Natural killer cell (primary cell): ENCODE measurements at regions of chr5 and their contacts with region 1.

Region 1: DNA sequence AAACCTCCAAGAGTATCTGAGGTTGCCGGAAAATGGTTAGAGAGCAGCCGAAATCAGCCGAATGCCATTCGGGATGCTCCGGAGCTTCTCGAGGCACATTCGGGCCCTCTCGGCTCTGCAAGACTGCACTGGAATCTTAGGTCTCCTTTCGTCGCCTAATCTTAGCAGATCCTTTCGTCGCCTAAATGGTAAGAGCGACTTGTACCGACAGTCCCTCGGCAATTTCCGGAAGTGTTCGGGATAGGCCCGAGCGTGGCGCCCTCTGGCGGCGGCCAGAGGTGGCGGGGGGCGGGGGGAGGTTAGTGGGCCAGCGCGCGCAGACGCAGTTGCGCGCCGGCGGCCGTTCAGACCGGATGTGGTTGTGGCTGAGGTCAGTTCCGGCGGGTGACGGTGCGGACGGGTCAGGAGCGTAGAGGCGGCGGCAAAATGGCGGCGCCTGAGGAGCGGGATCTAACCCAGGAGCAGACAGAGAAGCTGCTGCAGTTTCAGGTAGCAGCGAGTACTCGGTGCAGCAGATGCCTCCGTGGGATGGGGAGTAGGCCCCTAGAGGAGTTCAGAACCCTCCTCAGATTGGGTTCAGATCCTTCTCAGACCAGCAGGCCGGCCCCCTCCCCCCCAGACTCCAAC is at the start of gene FAF2:
- DNase-seq: peak; percentile 98 to 100
- ATAC-seq: peak; percentile 86 to 98 (median 88)
- H3K4me3 ChIP-seq: peak within 1 kb of the TSS; percentile 93
- H3K4me3 Mint-ChIP-seq: peak within 1 kb of the TSS; percentile 96
- H3K27ac ChIP-seq: peak within 1 kb of the TSS; percentile 87
- H3K27ac Mint-ChIP-seq: peak within 1 kb of the TSS; percentile 92 to 98
- H3K4me1 ChIP-seq: peaks cover 21% of the 10 kb centered on the region
- H3K4me1 Mint-ChIP-seq: peaks cover 42 to 49% of the 10 kb centered on the region in 2 donors
- H3K27me3 ChIP-seq: no peaks in the 10 kb centered on the region
- H3K27me3 Mint-ChIP-seq: no peaks in the 10 kb centered on the region
- CTCF ChIP-seq: peak; percentile 92
- total RNA-seq, gene FAF2: 32.1 to 32.5 (median 32.1) TPM

Region 2: DNA sequence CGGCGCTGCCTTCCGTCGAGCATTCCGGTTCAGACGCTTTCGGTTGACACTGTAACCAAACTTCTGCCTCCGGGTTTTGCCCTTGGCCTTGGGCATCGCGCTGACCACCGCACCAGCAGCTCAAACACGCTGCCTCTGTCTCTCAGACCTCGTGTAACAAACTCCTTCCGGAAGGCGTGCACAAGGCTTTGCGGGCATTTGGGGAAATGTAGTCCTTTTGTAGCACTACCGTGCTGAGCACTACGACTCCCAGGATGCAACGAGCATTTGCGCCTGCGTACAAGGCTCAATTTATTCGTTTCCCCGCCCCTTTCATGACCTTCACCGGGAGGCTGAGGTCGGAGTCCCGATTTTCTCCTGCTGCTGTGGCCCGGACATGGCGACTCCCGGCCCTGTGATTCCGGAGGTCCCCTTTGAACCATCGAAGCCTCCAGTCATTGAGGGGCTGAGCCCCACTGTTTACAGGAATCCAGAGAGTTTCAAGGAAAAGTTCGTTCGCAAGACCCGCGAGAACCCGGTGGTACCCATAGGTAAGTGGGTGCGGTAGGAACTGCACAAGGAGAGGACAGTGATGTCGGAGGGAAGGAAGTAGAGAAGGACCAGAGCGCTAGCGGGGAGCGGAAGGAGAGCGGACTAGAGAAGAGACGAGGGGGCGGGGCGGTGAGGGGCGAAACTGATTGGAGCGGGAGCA is 59.5 kb before region 1 on chr5 and contains the starts of genes HIGD2A and NOP16:
- intact Hi-C with region 1: loop called (anchors 1 kb)
- DNase-seq: peak; percentile 95 to 99
- ATAC-seq: peak; percentile 87 to 97 (median 89)
- H3K4me3 ChIP-seq: peak within 1 kb of the TSS; percentile 93
- H3K4me3 Mint-ChIP-seq: peak within 1 kb of the TSS; percentile 99
- H3K27ac ChIP-seq: peak within 1 kb of the TSS; percentile 97
- H3K27ac Mint-ChIP-seq: peak within 1 kb of the TSS; percentile 90 to 100
- H3K4me1 ChIP-seq: peaks cover 20% of the 10 kb centered on the region
- H3K4me1 Mint-ChIP-seq: peaks cover 34 to 36% of the 10 kb centered on the region in 2 donors
- H3K27me3 ChIP-seq: no peaks in the 10 kb centered on the region
- H3K27me3 Mint-ChIP-seq: no peaks in the 10 kb centered on the region
- CTCF ChIP-seq: no peak
- total RNA-seq, gene HIGD2A: 83.5 to 90.2 (median 86.2) TPM
- total RNA-seq, gene NOP16: 6.4 to 12.4 (median 12.1) TPM

Region 3: DNA sequence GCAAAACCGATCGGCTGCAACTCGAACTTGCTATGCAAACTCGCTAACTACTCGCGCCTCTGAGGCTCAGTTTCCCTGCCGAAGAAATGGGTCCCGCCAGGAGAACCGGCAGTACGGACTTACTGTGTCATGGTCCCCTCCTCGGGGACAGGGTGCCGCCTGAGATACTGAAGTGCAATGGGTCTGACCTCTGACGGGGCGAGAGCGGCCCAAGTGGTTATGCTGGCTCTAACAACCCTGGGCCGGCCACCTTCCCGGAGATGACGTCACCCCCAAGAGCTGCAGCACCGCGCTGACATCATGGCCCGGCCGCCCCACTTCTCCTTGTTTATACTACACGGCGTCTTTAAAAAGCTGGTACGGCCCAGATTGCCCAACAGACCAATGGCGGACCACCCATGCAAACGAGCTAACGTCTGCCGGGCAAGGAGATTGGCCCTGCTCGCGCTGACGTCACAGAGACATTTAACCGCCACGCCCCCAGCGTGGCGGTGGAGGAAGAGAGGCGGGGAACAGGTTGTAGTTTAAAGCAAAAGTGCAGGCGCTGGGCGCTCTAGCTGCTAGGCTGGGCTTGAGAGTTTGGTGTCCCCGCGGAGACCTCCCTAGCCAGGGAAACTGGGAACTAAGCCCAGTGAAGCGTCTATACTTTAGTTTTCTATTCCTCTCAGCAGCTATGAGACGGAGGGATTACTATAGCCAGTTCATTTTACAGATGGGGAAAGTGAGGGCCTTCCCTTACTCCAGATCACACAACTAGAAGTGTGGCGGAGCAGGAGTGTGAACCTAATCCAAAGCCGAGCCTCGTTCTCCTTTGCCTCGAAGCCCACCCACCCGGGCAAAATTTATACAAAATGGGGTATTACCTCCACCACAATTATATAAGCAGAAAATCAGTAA is 89.8 kb after region 1 on chr5:
- intact Hi-C with region 1: loop called (anchors 1 kb)
- DNase-seq: peak; percentile 93 to 99
- ATAC-seq: peak; percentile 67 to 87 (median 73)
- H3K4me3 ChIP-seq: peak overlapping the region; percentile 98
- H3K4me3 Mint-ChIP-seq: peak overlapping the region; percentile 97
- H3K27ac ChIP-seq: peak overlapping the region; percentile 100
- H3K27ac Mint-ChIP-seq: peak overlapping the region; percentile 99 to 100
- H3K4me1 ChIP-seq: peaks cover 73% of the 10 kb centered on the region
- H3K4me1 Mint-ChIP-seq: peaks cover 84 to 85% of the 10 kb centered on the region in 2 donors
- H3K27me3 ChIP-seq: no peaks in the 10 kb centered on the region
- H3K27me3 Mint-ChIP-seq: no peaks in the 10 kb centered on the region
- CTCF ChIP-seq: no peak